Caco-2 (cell line): ENCODE measurements at regions of chr10 and their contacts with region 1.

Region 1: GRCh38 chr10:50561816-50562215 is 61.9 kb downstream of the SGMS1 start:
- DNase-seq: peak in 1 of 2 experiments; percentile 58
- H3K4me3 ChIP-seq: no peak overlapping the region
- H3K4me3 Mint-ChIP-seq: no peak overlapping the region
- H3K27ac Mint-ChIP-seq: no peak overlapping the region
- H3K4me1 ChIP-seq: peaks cover 6% of the 10 kb centered on the region
- H3K4me1 Mint-ChIP-seq: peaks cover 17% of the 10 kb centered on the region
- H3K27me3 ChIP-seq: no peaks in the 10 kb centered on the region
- H3K27me3 Mint-ChIP-seq: no peaks in the 10 kb centered on the region
- CTCF ChIP-seq: peak; percentile 92 to 95

Region 2: DNA sequence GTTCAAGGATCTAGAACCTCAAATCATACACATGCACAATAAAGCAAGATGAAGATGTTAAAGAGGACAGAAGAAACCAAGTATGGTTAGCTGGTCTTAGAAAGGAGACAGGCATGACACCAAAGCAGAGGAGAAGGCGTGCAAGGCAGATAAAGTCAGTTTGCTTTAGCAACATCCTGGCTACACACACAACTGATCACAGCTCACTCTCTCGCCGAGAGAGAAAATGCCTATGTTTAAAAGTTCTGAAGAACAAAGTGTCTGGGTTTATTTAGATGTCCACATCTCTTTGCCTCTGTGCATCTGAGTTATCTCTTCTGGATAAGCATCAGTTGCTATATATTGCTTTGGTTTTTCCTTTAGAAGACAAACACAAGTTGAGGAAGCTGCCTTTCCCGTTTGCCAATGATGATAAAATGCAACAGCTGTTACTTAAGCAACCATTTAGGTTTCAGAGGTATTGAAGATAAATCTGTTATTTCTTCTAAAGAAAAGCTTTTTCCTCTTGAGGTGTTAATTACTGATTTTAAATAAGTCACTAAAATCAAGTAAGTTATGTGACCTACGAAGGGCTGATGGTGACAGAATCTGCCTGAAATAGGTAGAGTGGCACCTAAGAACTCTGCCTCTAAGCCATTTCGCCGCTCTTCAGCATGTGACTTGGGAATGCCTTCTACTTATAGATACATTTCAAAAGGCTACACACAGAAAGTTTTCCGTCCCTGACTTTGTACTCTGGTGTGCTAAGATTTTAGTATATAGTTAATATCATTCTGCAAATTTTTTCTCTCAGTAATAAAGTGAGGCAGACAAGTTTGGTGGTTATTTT is 164.3 kb before region 1 on chr10:
- CTCF ChIA-PET with region 1: no interaction called
- POLR2A ChIA-PET with region 1: no interaction called
- intact Hi-C with region 1: no loop called
- DNase-seq: no peak
- H3K4me3 ChIP-seq: no peak overlapping the region
- H3K4me3 Mint-ChIP-seq: no peak overlapping the region
- H3K27ac Mint-ChIP-seq: no peak overlapping the region
- H3K4me1 ChIP-seq: peaks cover 69% of the 10 kb centered on the region
- H3K4me1 Mint-ChIP-seq: peaks cover 68% of the 10 kb centered on the region
- H3K27me3 ChIP-seq: no peaks in the 10 kb centered on the region
- H3K27me3 Mint-ChIP-seq: no peaks in the 10 kb centered on the region
- CTCF ChIP-seq: no peak

Region 3: DNA sequence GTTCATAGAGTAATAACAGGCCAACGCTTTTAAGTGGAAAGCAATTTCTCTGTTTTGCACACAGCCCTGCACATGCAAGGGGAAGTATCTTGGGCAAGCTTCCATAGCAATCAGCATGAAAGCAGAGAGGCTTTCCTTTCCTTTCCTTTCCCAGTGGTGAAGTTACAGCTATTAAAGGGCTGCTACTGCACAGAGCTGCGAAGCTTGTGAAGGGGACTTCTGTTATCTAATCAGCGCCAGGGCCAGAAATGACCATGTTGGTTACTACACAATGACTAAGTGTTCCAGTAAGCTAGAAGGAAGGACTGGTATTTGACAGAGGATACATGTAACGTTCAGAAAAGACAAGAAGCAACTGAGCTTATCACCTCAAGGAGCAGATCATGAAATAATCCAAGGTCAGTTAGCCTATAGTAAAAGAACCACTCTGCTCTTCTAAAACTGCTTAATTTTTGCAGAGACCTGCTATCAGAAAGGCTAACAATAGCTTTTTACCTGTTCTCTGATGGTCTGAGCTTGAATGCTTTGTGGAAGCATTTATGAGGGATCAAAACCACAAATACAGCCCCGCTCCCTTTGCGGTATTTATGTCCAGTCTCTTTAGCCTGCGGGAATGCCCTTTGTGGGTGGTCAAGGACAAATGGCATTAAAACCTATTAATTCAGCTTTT is 16.0 kb after region 1 on chr10:
- CTCF ChIA-PET with region 1: no interaction called
- POLR2A ChIA-PET with region 1: no interaction called
- intact Hi-C with region 1: loop called (anchors 1 kb)
- DNase-seq: peak; percentile 55 to 76
- H3K4me3 ChIP-seq: no peak overlapping the region
- H3K4me3 Mint-ChIP-seq: peak overlapping the region; percentile 65
- H3K27ac Mint-ChIP-seq: peak overlapping the region; percentile 82
- H3K4me1 ChIP-seq: peaks cover 60% of the 10 kb centered on the region
- H3K4me1 Mint-ChIP-seq: peaks cover 72% of the 10 kb centered on the region
- H3K27me3 ChIP-seq: no peaks in the 10 kb centered on the region
- H3K27me3 Mint-ChIP-seq: no peaks in the 10 kb centered on the region
- CTCF ChIP-seq: no peak

Region 4: DNA sequence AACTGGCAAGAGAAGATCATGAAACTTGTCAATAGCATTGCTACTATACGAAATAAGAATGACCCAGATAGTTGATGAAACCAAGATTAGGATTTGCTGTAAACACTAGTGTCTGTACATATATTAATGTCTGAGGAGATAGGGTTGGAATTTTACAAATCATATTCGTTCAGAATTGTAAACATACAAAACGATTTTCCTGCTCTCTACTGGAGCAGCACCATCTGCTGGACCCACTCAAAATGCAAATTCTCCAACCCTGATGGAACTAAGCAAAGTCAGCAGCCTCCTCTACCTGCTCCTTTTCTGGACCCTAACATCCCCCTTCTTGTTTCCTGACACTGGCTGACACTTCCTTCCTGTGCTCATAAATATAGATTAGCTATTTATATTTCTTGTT is 91.3 kb after region 1 on chr10:
- CTCF ChIA-PET with region 1: no interaction called
- POLR2A ChIA-PET with region 1: no interaction called
- intact Hi-C with region 1: loop called (anchors 1 kb)
- DNase-seq: peak in 1 of 2 experiments; percentile 56
- H3K4me3 ChIP-seq: no peak overlapping the region
- H3K4me3 Mint-ChIP-seq: no peak overlapping the region
- H3K27ac Mint-ChIP-seq: no peak overlapping the region
- H3K4me1 ChIP-seq: peaks cover 26% of the 10 kb centered on the region; the same call in 1 of the 2 replicates
- H3K4me1 Mint-ChIP-seq: no peaks in the 10 kb centered on the region
- H3K27me3 ChIP-seq: no peaks in the 10 kb centered on the region
- H3K27me3 Mint-ChIP-seq: no peaks in the 10 kb centered on the region
- CTCF ChIP-seq: peak; percentile 59 to 84

Region 5: GRCh38 chr10:50658165-50658564 is 96.3 kb after region 1 on chr10:
- CTCF ChIA-PET with region 1: interaction called, 4 read pairs
- POLR2A ChIA-PET with region 1: interaction called, 13 read pairs
- intact Hi-C with region 1: loop called (anchors 1 kb)
- DNase-seq: no peak
- H3K4me3 ChIP-seq: no peak overlapping the region
- H3K4me3 Mint-ChIP-seq: peak overlapping the region; percentile 10
- H3K27ac Mint-ChIP-seq: no peak overlapping the region
- H3K4me1 ChIP-seq: peaks cover 11% of the 10 kb centered on the region; the same call in 1 of the 2 replicates
- H3K4me1 Mint-ChIP-seq: no peaks in the 10 kb centered on the region
- H3K27me3 ChIP-seq: no peaks in the 10 kb centered on the region; the same call in 1 of the 2 replicates
- H3K27me3 Mint-ChIP-seq: peaks cover 3% of the 10 kb centered on the region
- CTCF ChIP-seq: no peak